Activated CD4-positive, alpha-beta T cell treated with anti-CD3 and anti-CD28 coated beads for 36 hours (primary cell): ENCODE measurements at regions of chr5 and their contacts with region 1.

Region 1: DNA sequence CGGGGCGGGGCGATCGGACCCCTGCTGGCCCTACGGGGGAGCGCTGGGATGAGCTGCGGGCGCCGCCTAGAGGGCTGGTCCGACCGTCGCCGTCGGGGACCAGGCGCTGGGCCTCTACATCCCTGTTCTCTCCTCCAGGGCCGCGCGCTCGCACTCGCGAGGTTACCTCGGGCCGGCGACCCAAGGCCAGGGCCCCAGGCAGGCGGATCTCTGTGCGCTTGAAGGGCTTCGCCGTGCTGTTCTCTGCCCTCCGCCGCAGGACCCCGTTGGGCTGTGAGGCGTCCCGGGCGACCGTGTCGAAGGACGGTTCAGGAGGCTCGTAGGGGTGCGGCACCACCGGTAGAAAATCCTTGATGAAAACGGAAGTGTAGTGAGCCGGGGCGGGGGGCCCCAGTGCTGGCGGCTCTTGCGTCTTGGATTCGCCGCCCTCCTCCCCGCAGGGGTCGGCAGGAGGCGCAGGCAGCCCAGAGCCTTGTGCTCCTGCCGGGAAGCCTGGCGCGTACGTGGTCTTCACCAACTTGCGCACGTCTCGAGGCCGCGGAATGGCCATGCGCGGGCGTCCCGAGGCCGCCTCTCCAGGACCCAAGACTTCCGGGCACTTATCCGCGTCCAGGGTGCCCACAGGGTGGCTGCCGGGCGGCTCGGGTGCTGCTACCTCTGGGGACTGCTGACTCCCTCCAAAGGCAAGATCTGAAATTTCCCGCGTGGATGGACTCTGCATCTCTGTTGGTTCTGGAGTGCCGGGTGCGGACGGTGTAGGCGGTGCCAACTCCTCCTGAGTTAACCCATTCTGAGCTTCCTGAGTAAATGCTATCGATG is 2.0 kb downstream of the PROB1 start:
- DNase-seq: peak; percentile 93
- ATAC-seq: peak; percentile 67
- H3K4me3 Mint-ChIP-seq: peak overlapping the region; percentile 78
- H3K27ac Mint-ChIP-seq: peak overlapping the region; percentile 85
- H3K4me1 Mint-ChIP-seq: peaks cover 40% of the 10 kb centered on the region
- H3K27me3 Mint-ChIP-seq: no peaks in the 10 kb centered on the region

Region 2: GRCh38 chr5:138654281-138654867 is 738.5 kb before region 1 on chr5:
- CTCF ChIA-PET with region 1: no interaction called
- POLR2A ChIA-PET with region 1: no interaction called
- intact Hi-C with region 1: loop called in 1 of 2 experiments (anchors 10 kb)
- DNase-seq: peak; percentile 81
- ATAC-seq: peak; percentile 97
- H3K4me3 Mint-ChIP-seq: no peak overlapping the region
- H3K27ac Mint-ChIP-seq: peak overlapping the region; percentile 28
- H3K4me1 Mint-ChIP-seq: peaks cover 24% of the 10 kb centered on the region
- H3K27me3 Mint-ChIP-seq: peaks cover 72% of the 10 kb centered on the region

Region 3: GRCh38 chr5:139091439-139092156 is 301.3 kb before region 1 on chr5:
- CTCF ChIA-PET with region 1: no interaction called
- POLR2A ChIA-PET with region 1: no interaction called
- intact Hi-C with region 1: no loop called
- DNase-seq: no peak
- ATAC-seq: no peak
- H3K4me3 Mint-ChIP-seq: no peak overlapping the region
- H3K27ac Mint-ChIP-seq: no peak overlapping the region
- H3K4me1 Mint-ChIP-seq: peaks cover 14% of the 10 kb centered on the region
- H3K27me3 Mint-ChIP-seq: no peaks in the 10 kb centered on the region

Region 4: GRCh38 chr5:139246394-139246793 is 146.5 kb before region 1 on chr5:
- CTCF ChIA-PET with region 1: no interaction called
- POLR2A ChIA-PET with region 1: no interaction called
- intact Hi-C with region 1: loop called in 1 of 2 experiments (anchors 1 kb)
- DNase-seq: peak; percentile 84
- ATAC-seq: peak; percentile 100
- H3K4me3 Mint-ChIP-seq: no peak overlapping the region
- H3K27ac Mint-ChIP-seq: peak overlapping the region; percentile 75
- H3K4me1 Mint-ChIP-seq: peaks cover 24% of the 10 kb centered on the region
- H3K27me3 Mint-ChIP-seq: peaks cover 2% of the 10 kb centered on the region

Region 5: GRCh38 chr5:139293504-139294373 is 99.1 kb before region 1 on chr5 and contains the start of gene MATR3:
- CTCF ChIA-PET with region 1: interaction called, 3 read pairs
- POLR2A ChIA-PET with region 1: interaction called, 6 read pairs
- intact Hi-C with region 1: loop called in 1 of 2 experiments (anchors 1 kb)
- DNase-seq: peak; percentile 98
- ATAC-seq: peak; percentile 92
- H3K4me3 Mint-ChIP-seq: peak within 1 kb of the TSS; percentile 97
- H3K27ac Mint-ChIP-seq: peak within 1 kb of the TSS; percentile 99
- H3K4me1 Mint-ChIP-seq: peaks cover 37% of the 10 kb centered on the region
- H3K27me3 Mint-ChIP-seq: no peaks in the 10 kb centered on the region
- total RNA-seq, gene MATR3: 113 to 133 TPM

Region 6: DNA sequence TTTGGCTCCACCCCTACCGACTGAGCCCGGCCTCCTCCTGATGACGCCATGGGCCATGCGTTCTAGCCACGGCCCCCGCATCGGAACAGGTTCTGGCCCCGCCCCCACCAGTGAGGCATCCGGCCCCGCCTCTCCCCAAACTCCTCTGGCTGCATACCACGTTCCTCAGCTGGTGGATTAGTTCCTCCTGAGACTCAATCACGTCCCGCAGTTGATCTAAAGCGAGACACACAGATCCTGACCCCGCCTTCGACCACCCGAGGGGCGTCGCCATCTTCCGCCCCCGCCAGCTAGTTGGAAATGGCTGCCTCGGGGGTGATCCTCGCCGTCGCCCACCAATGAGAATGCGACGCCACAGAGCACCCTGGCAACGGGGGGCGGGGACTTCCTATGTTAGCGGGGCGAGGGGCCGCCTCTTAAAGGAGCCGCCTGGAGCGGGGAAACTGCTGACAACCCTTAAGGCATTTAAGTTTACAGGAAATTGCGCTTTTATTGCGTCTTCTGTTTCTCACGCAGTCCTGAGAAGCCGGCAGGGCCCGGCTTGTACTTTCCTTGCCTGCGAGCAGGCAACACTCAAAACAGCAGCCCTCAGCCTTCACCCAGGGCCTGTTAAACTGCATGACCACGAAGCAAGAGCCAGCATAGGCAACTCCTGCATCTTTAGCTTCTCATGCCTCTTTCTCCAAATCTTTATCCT is 11.0 kb after region 1 on chr5 and contains the start of gene SPATA24:
- CTCF ChIA-PET with region 1: interaction called, 26 read pairs
- POLR2A ChIA-PET with region 1: no interaction called
- intact Hi-C with region 1: loop called (anchors 1 kb)
- DNase-seq: peak; percentile 100
- ATAC-seq: peak; percentile 93
- H3K4me3 Mint-ChIP-seq: peak within 1 kb of the TSS; percentile 79
- H3K27ac Mint-ChIP-seq: peak within 1 kb of the TSS; percentile 99
- H3K4me1 Mint-ChIP-seq: peaks cover 37% of the 10 kb centered on the region
- H3K27me3 Mint-ChIP-seq: no peaks in the 10 kb centered on the region
- total RNA-seq, gene SPATA24: 4.6 to 5.9 TPM

Region 7: DNA sequence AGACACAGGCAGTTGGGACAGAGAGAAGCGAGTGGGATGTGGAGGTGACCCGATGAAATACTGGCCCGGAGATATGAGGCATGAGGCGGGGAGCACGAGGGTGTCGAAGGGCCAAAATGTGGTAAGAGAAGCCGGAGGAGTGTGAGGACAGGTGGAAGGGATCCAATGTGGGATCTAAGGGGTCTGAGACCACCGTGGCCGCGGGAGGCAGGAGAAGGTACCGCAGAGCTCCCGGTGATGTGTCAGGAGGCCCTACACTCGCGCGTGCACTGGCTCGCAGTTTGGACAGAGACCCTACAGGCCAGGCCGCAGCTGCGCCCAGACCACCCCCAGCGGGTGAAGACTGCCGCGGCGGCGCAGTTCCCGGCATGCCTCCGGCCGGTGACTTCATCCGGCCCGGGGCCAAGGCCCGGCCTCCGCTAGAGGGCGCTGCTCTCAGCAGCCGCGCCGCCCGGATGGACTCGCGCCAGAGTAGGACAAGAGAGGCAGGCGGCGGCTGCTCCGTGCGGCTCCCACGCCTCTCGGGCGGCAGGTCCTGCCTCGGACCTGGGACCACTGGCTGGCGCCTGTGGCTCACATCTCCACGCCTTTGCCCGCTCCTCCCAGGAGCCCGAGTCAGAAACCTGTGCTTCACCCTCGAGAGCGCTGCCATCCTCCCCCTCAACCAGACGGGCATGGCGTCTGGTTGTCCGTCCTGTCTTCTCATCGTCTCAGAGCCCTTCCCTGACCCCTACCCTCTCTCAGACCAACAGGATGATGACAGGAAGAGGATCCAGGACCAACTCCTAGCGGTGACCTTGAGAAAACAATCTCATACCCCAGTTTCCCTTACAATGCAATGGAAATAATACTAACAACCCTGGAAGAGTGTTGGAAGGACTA is 125.0 kb after region 1 on chr5:
- CTCF ChIA-PET with region 1: interaction called, 13 read pairs
- POLR2A ChIA-PET with region 1: no interaction called
- intact Hi-C with region 1: loop called in 1 of 2 experiments (anchors 1 kb)
- DNase-seq: peak; percentile 95
- ATAC-seq: peak; percentile 91
- H3K4me3 Mint-ChIP-seq: peak overlapping the region; percentile 72
- H3K27ac Mint-ChIP-seq: peak overlapping the region; percentile 91
- H3K4me1 Mint-ChIP-seq: peaks cover 30% of the 10 kb centered on the region
- H3K27me3 Mint-ChIP-seq: no peaks in the 10 kb centered on the region

Region 8: GRCh38 chr5:139637438-139638089 is 244.7 kb after region 1 on chr5:
- CTCF ChIA-PET with region 1: no interaction called
- POLR2A ChIA-PET with region 1: no interaction called
- intact Hi-C with region 1: no loop called
- DNase-seq: peak; percentile 69
- ATAC-seq: no peak
- H3K4me3 Mint-ChIP-seq: peak overlapping the region; percentile 38
- H3K27ac Mint-ChIP-seq: no peak overlapping the region
- H3K4me1 Mint-ChIP-seq: peaks cover 37% of the 10 kb centered on the region
- H3K27me3 Mint-ChIP-seq: no peaks in the 10 kb centered on the region